ENCODE measurements at regions of chr15 and their contacts with region 1.

Region 1: GRCh38 chr15:78077058-78077877 is at the start of gene TBC1D2B:
- DNase-seq: peak in 8 of 10 donors; percentile 41 to 79 (median 61)
- H3K4me3 ChIP-seq: peak within 1 kb of the TSS; percentile 66 to 97 (median 90)
- H3K27ac ChIP-seq: peak within 1 kb of the TSS; percentile 45 to 96 (median 87)
- H3K27me3 ChIP-seq: no peaks in the 10 kb centered on the region
- CTCF ChIP-seq: peak in 19 of 56 donors; percentile 4 to 42 (median 22)
- total RNA-seq, gene TBC1D2B: 18.5 to 62.5 (median 37.5) TPM

Region 2: DNA sequence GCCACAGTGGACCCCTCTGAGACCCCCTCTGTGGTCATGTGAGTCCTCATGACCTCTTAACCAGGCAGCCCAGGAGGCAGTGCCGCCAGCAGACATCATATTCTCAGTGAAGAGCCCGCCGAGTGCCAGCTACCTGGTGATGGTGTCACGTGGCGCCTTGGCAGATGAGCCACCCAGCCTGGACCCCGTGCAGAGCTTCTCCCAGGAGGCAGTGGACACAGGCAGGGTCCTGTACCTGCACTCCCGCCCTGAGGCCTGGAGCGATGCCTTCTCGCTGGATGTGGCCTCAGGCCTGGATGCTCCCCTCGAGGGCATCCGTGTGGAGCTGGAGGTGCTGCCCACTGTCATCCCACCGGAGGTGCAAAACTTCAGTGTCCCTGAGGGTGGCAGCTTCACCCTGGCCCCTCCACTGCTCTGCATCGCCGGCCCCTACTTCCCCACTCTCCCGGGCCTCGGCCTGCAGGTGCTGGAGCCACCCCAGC is 176.0 kb before region 1 on chr15:
- intact Hi-C with region 1: no loop called
- DNase-seq: no peak
- H3K4me3 ChIP-seq: no peak overlapping the region
- H3K27ac ChIP-seq: no peak overlapping the region
- H3K27me3 ChIP-seq: no peaks in the 10 kb centered on the region
- CTCF ChIP-seq: no peak

Region 3: DNA sequence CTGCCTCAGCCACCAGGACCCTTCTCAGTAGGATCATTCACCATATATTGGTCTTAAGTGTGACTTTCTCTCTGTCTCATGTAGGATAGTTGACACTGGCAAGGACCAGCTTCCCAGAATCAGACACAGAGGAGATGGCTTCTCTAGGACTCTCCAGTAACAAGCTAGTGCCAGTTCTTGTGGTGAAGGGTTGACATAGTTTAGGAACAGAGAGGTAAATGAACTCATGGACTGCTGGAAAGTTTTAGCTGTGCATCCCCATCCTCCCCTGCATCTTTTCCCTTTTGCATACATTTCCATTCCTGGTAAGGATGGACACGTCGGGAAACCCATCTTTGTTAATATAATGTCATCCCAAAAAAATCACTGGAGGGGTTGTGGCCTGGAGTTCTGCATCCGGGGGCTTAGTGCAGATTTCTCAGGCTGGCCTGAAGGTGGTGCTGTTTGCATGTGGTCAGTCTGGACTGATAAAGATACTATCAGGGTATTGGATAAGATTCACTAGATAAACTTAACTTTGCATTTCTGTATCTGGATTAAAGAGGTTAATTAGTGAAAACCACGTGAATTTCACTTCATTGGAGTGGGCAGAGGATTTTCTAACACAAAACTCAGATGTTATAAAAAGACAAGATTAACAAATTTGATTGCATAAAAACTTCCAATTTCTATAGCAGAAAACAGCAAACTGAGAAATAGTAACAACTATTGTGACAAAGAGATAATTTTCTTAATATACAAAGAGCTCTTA is 110.6 kb before region 1 on chr15:
- intact Hi-C with region 1: loop called in 1 of 2 experiments (anchors 10 kb)
- DNase-seq: peak in 7 of 10 donors; percentile 44 to 75 (median 64)
- H3K4me3 ChIP-seq: no peak overlapping the region
- H3K27ac ChIP-seq: no peak overlapping the region
- H3K27me3 ChIP-seq: no peaks in the 10 kb centered on the region
- CTCF ChIP-seq: peak; percentile 70 to 97 (median 89)

Region 4: DNA sequence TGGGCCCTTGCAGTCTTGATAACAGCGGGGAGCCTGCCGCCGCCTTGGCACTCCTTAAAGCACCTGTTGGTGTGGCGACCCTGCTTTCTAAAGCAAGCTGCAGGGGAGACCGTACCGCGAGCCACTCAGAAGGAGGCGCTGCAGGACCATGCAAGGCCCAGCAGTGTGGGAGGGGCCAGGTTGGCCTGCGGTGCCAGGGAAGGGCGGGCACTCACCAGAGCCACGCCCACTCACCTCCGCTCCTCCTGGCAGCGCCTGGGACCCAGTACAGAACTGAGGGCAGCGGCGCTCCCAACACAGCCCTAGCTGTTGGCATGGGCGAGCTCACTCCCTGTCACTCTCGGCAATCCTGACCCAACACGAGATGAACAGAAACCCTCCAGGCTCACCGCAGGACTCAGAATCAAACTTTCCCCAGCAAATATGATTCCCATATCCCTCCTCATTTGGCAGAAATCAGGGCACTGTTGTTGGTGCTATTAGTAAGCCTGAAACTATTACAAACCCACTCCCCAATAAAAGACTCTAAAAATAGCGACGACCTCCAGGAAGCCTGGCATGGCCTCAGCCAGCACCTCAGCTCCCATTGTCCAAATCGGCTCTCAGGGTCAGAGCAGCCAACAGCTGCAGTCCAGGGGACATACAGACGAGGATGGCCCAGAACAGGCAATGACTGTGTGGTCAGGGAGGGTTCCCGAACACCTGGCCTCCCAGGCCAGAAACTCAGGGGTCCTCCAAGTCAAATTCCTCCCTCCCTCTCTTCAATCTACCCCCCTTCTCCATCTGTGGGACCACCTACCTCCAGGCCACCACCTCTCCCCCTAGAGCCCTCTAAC is 77.0 kb before region 1 on chr15:
- intact Hi-C with region 1: loop called in 1 of 2 experiments (anchors 5 kb)
- DNase-seq: peak in 3 of 10 donors; percentile 32 to 46 (median 43)
- H3K4me3 ChIP-seq: no peak overlapping the region
- H3K27ac ChIP-seq: no peak overlapping the region
- H3K27me3 ChIP-seq: no peaks in the 10 kb centered on the region
- CTCF ChIP-seq: peak in 38 of 56 donors; percentile 16 to 59 (median 39)

Region 5: DNA sequence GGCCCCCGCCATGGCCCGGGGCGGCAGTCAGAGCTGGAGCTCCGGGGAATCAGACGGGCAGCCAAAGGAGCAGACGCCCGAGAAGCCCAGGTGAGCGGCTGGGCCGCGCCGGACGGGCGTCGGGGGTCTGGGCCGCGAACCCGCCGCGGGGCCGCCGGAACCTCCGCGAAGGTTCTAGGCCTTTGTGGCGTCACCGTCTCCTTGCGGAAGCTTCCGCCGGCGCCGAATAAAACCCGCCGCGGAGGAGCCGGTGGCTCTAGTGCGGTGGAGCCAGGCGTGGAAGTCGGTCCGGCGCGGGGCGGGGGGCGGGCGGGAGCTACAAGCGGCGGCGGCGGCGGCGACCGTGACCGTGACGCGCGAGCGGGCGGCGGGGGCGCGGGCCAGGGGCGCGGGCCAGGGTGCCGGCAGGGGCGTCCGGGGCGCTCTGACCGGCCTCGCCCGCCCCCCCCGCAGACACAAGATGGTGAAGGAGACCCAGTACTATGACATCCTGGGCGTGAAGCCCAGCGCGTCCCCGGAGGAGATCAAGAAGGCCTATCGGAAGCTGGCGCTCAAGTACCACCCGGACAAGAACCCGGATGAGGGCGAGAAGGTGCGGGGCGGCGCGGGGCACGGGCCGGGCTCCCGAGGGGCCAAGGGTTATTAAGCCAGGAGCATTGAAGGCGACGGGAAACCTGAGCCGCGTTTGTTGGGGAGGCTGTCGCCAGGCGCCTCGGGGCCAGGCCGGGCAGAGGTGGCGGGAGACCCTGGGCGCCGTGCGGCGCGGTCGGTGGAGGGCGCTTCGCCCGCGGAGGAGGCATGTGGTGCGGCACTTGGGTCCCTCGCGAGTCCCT is 187.3 kb after region 1 on chr15 and contains the start of gene DNAJA4:
- intact Hi-C with region 1: no loop called
- DNase-seq: peak; percentile 49 to 73 (median 70)
- H3K4me3 ChIP-seq: peak within 1 kb of the TSS; percentile 59 to 95 (median 81)
- H3K27ac ChIP-seq: peak within 1 kb of the TSS; percentile 28 to 97 (median 89)
- H3K27me3 ChIP-seq: no peaks in the 10 kb centered on the region
- CTCF ChIP-seq: peak in 50 of 56 donors; percentile 6 to 64 (median 42)
- total RNA-seq, gene DNAJA4: 52.5 to 507 (median 97.1) TPM